HepG2 (cell line): ENCODE measurements at regions of chr15 and their contacts with region 1.

Region 1: DNA sequence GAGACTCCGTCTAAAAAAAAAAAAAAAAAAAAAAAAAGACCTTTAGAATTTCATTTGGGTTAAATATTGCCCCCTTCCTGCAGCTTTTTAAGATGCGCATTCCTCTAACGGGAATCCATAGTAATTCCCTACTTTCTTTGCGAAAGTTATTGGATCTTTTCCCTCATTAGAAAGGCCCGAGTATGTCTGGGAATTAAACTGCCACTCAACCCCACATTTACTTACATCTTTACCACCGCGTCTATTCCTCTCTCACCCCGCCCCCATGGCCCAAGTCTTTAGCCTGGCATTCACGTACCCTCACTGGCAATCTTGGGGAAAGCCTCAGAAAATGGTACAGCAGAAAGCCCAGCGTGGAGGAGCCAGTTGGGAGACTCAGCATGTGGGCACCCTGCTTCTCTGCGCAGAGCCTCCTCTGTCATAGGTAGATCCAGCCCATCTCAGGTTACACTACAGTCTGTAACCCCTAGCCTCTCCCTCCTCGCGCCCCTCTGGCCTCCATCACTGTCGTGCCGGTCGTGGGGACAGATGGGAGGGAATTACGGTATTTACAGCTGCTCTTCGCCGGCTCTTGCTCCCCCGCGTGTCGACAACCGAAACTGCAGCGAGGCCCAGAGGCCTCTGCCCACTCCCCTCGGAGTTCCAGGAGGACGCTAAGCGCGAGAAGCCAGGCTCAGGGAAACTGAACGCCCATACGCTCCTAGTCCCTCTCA is 6.4 kb upstream of the ANKDD1A start:
- DNase-seq: peak; percentile 22
- ATAC-seq: peak; percentile 89
- H3K4me3 ChIP-seq: no peak overlapping the region
- H3K27ac ChIP-seq: no peak overlapping the region
- H3K4me1 ChIP-seq: peaks cover 4% of the 10 kb centered on the region; the same call in 1 of the 2 replicates
- H3K27me3 ChIP-seq: 0 out of 5 replicates have a peak, but pooled peaks cover 0 to 3% of the 10 kb centered on the region in 2 experiments
- CTCF ChIP-seq: peak; percentile 81
- EP300 ChIP-seq: no peak
- POLR2A ChIP-seq: no peak
- RAD21 ChIP-seq: peak; percentile 68

Region 2: GRCh38 chr15:64919721-64920120 is 14.4 kb after region 1 on chr15:
- CTCF ChIA-PET with region 1: no interaction called
- POLR2A ChIA-PET with region 1: no interaction called
- in situ Hi-C with region 1: no loop called
- intact Hi-C with region 1: loop called (anchors 1 kb)
- DNase-seq: no peak
- ATAC-seq: no peak
- H3K4me3 ChIP-seq: no peak overlapping the region
- H3K27ac ChIP-seq: no peak overlapping the region
- H3K4me1 ChIP-seq: peaks cover 14% of the 10 kb centered on the region
- H3K27me3 ChIP-seq: peaks cover 10 to 21% of the 10 kb centered on the region in 2 experiments; a peak in 4 of 5 replicates
- CTCF ChIP-seq: no peak
- EP300 ChIP-seq: no peak
- POLR2A ChIP-seq: no peak
- RAD21 ChIP-seq: no peak